ENCODE measurements at regions of chr22 and their contacts with region 1.

Region 1: GRCh38 chr22:37817705-37818408 is 5.3 kb upstream of the GALR3 start:
- DNase-seq: peak; percentile 94
- ATAC-seq: peak; percentile 78
- H3K4me3 Mint-ChIP-seq: peak overlapping the region; percentile 71
- H3K27ac Mint-ChIP-seq: peak overlapping the region; percentile 98
- H3K4me1 Mint-ChIP-seq: peaks cover 22% of the 10 kb centered on the region
- H3K27me3 Mint-ChIP-seq: peaks cover 39% of the 10 kb centered on the region
- CTCF ChIP-seq: peak; percentile 91

Region 2: GRCh38 chr22:37658133-37659065 is 159.5 kb before region 1 on chr22 and contains the start of gene PDXP:
- CTCF ChIA-PET with region 1: interaction called, 10 read pairs
- POLR2A ChIA-PET with region 1: no interaction called
- DNase-seq: peak; percentile 98
- ATAC-seq: peak; percentile 96
- H3K4me3 Mint-ChIP-seq: peak within 1 kb of the TSS; percentile 82
- H3K27ac Mint-ChIP-seq: peak within 1 kb of the TSS; percentile 97
- H3K4me1 Mint-ChIP-seq: peaks cover 29% of the 10 kb centered on the region
- H3K27me3 Mint-ChIP-seq: no peaks in the 10 kb centered on the region
- CTCF ChIP-seq: no peak
- total RNA-seq, gene PDXP: 36.1 to 42.5 TPM (median 42.3 TPM) in 3 replicates

Region 3: GRCh38 chr22:37716708-37717107 is 101.1 kb before region 1 on chr22:
- CTCF ChIA-PET with region 1: no interaction called
- POLR2A ChIA-PET with region 1: no interaction called
- DNase-seq: no peak
- ATAC-seq: no peak
- H3K4me3 Mint-ChIP-seq: no peak overlapping the region
- H3K27ac Mint-ChIP-seq: peak overlapping the region; percentile 73; the same call in 1 of the 2 replicates
- H3K4me1 Mint-ChIP-seq: no peaks in the 10 kb centered on the region
- H3K27me3 Mint-ChIP-seq: peaks cover 3% of the 10 kb centered on the region; the same call in 1 of the 2 replicates
- CTCF ChIP-seq: no peak

Region 4: DNA sequence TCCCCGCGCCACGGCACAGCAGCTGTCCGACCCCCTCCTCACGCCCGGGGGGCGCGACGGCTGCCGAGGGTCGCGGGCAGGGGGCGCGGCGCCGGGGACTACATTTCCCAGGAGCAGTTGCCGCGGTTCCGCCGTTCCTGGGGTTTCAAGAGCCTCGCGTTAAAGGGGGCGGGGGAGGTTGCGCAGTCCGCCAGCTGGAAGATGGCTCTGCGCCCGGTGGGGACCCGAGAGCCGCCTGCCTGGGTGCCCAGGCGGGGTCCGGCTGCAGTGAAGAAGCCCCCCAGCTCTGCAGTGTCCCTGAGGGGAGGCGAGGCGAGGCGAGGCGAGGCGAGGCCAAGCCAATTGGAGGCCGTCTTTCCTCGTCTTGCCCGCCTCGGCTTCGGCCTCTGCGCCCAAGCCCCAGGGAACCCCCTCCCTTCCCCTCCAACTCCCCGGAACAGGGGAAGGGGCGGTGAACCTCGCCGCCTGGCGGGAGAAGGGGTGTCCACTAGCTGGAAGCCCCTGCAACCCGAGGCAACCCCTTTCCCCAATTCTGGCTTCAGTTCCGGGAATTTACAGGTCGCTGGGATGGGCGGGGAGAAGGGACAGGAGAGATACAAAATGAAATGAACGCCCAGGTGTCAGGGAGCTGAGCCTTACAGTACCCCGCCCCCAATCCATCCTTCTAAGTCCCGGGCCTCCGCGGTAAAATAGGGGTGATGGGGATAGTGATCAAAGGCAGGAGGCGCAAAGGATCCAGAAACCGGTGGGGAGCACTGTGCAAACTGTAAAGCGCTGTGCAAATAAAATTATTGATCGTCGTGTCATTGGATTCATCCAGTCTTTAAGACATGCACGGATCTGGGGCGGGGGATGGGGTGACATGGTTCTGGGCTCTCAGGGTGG is 15.3 kb before region 1 on chr22:
- CTCF ChIA-PET with region 1: interaction called, 79 read pairs
- POLR2A ChIA-PET with region 1: interaction called, 42 read pairs
- DNase-seq: peak; percentile 79
- ATAC-seq: peak; percentile 59
- H3K4me3 Mint-ChIP-seq: peak overlapping the region; percentile 81
- H3K27ac Mint-ChIP-seq: no peak overlapping the region
- H3K4me1 Mint-ChIP-seq: peaks cover 30% of the 10 kb centered on the region
- H3K27me3 Mint-ChIP-seq: peaks cover 82% of the 10 kb centered on the region
- CTCF ChIP-seq: no peak

Region 5: DNA sequence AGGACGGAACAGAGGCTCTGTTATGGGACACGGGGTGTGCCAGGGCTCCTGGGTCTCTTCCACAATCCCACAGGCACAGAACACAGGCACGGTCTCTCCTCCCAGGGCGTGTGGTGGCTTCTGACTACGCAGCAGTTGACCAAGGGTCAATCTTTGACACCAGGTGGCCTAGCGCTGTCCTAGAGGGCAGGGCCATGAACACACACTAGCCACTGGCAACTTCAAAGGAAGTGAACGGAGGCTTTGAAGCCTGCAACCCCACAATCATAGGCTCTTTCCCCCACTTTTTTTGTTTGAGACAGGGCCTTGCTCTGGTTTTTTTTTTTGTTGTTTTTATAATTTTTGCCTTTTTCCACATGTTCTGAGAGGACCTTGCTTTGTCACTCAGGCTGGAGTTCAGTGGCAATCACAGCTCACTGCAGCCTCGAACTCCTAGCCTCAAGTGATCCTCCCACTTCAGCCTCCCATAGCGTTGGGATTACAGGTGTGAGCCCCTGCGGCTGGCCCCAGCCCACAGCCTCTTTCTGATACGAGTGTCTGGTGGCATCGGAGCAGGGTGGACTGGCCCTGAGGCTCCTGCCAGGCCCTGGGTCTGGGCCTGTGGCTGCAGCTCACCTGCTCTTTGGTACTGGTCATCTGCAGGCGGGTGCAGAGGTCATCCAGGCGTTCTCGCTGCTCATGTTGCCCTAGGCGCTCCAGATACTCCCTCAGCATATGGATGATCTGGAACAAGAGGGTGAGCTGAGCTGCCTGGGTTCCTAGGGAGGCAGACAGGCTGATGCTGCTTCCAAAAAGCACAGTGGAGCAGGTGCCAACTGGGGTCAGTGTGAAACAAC is 14.4 kb after region 1 on chr22:
- CTCF ChIA-PET with region 1: interaction called, 27 read pairs
- POLR2A ChIA-PET with region 1: interaction called, 5 read pairs
- DNase-seq: no peak
- ATAC-seq: no peak
- H3K4me3 Mint-ChIP-seq: no peak overlapping the region
- H3K27ac Mint-ChIP-seq: no peak overlapping the region
- H3K4me1 Mint-ChIP-seq: no peaks in the 10 kb centered on the region
- H3K27me3 Mint-ChIP-seq: no peaks in the 10 kb centered on the region
- CTCF ChIP-seq: no peak

Region 6: GRCh38 chr22:37862570-37863325 is 44.9 kb after region 1 on chr22:
- CTCF ChIA-PET with region 1: interaction called, 109 read pairs
- POLR2A ChIA-PET with region 1: interaction called, 16 read pairs
- DNase-seq: no peak
- ATAC-seq: no peak
- H3K4me3 Mint-ChIP-seq: no peak overlapping the region
- H3K27ac Mint-ChIP-seq: no peak overlapping the region
- H3K4me1 Mint-ChIP-seq: no peaks in the 10 kb centered on the region
- H3K27me3 Mint-ChIP-seq: no peaks in the 10 kb centered on the region
- CTCF ChIP-seq: no peak

Region 7: DNA sequence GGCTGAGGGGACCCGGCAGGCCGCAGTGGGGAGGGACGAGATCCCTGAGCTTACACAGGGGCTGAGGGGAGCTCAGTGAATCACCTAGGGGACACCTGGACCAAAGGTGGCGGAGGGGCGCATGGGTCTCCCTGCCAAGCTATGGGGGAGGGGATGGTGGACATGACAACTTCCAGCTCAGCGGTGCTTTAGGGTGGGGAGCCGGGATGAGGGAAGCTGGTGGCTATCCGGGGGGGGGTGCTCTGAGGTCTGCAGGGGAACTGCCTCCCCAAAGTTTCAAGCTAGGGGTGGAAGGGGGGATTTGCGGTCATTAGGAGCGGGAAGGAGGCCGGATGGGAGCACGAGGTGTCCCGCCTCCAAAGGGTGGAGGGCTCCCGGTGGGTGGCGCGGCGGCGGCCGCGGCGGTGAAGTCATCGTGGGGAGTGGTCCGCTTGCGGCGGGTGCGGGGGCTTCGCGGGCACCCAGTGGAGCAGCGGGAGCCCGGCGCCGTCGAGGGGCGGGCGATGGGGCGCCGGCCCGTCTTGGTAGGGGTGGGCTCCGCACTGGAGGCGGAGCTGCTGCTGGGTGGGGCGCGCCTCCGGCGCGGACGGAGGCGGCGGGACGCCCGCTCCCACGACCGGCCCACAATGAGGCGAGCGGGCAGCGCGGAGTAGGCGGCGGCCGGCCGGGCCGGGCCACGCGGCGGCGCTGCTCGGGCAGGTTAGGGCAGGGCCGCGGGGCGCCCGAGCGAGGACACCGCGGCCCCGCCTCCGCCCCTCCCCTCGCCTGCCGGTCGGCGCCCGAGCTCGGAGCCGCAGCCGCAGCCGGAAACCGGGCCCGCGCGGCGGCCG is 87.9 kb after region 1 on chr22 and contains the start of gene MICALL1:
- CTCF ChIA-PET with region 1: interaction called, 11 read pairs
- POLR2A ChIA-PET with region 1: no interaction called
- DNase-seq: peak; percentile 68
- ATAC-seq: peak; percentile 78
- H3K4me3 Mint-ChIP-seq: peak within 1 kb of the TSS; percentile 76
- H3K27ac Mint-ChIP-seq: no peak within 1 kb of the TSS; the same call in 1 of the 2 replicates
- H3K4me1 Mint-ChIP-seq: peaks cover 34% of the 10 kb centered on the region
- H3K27me3 Mint-ChIP-seq: no peaks in the 10 kb centered on the region
- CTCF ChIP-seq: no peak
- total RNA-seq, gene MICALL1: 34.1 to 47.2 TPM (median 38.6 TPM) in 3 replicates

Region 8: GRCh38 chr22:38012604-38013072 is 194.8 kb after region 1 on chr22:
- CTCF ChIA-PET with region 1: no interaction called
- POLR2A ChIA-PET with region 1: no interaction called
- DNase-seq: no peak
- ATAC-seq: no peak
- H3K4me3 Mint-ChIP-seq: no peak overlapping the region
- H3K27ac Mint-ChIP-seq: no peak overlapping the region
- H3K4me1 Mint-ChIP-seq: no peaks in the 10 kb centered on the region
- H3K27me3 Mint-ChIP-seq: peaks cover 10% of the 10 kb centered on the region
- CTCF ChIP-seq: no peak

Measured in WTC11 (cell line).